Activated CD4-positive, alpha-beta T cell treated with anti-CD3 and anti-CD28 coated beads, Interleukin-2, amount 10 ng/mL, durations not matched to agents 24 days and 14 days (primary cell): ENCODE measurements at regions of chr3 and their contacts with region 1.

Region 1: GRCh38 chr3:32502118-32502945 is at the start of gene CMTM6:
- DNase-seq: peak; percentile 92
- H3K4me3 Mint-ChIP-seq: peak within 1 kb of the TSS; percentile 90
- H3K27ac Mint-ChIP-seq: peak within 1 kb of the TSS; percentile 86
- H3K4me1 Mint-ChIP-seq: peaks cover 28% of the 10 kb centered on the region
- H3K27me3 Mint-ChIP-seq: peaks cover 2% of the 10 kb centered on the region
- total RNA-seq, gene CMTM6: 79.3 and 79.6 TPM in 2 replicates

Region 2: GRCh38 chr3:32684800-32685542 is 182.6 kb after region 1 on chr3 and contains the start of gene CNOT10:
- intact Hi-C with region 1: loop called (anchors 1 kb)
- DNase-seq: peak; percentile 99
- H3K4me3 Mint-ChIP-seq: peak within 1 kb of the TSS; percentile 95
- H3K27ac Mint-ChIP-seq: peak within 1 kb of the TSS; percentile 96
- H3K4me1 Mint-ChIP-seq: peaks cover 27% of the 10 kb centered on the region
- H3K27me3 Mint-ChIP-seq: no peaks in the 10 kb centered on the region
- total RNA-seq, gene CNOT10: 61.0 and 74.4 TPM in 2 replicates

Region 3: DNA sequence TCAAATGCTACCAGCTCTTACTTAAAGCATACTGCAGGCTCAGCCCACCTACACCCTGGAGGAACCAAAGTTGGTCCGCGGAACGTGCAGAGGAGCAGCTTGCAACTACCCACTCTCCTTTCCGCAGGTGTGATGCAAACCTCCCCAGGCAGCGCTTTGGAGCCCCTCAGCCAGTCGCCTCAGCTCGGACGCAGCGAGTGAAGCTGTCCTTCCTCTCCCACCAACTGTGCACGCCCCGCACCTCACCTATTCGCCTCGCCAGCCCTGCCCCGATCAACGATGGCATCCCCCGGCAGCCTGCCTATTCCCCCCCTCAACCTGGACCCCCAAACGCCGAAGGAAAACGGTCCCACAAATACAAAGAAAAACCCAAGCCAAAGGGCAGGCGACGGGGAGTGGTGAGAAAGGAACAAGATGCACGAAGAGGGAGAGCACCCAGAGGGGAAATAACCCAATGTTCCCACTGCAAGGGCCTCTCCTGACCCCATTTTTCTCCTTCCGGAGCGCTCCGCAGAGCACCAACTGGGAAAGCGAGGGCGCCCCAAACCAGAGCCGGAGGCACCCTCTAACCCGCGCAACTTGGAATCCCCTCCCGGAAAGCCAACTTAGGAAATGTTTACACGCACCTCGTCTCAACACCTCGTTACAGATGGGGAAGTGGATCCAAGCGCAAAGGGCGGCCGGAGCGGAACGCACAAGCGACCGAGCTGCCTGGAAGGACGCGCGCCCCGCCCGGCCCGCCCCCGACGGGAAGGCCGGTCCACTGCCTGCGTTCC is 593.9 kb after region 1 on chr3:
- intact Hi-C with region 1: loop called (anchors 5 kb)
- DNase-seq: peak; percentile 86
- H3K4me3 Mint-ChIP-seq: peak overlapping the region; percentile 99
- H3K27ac Mint-ChIP-seq: peak overlapping the region; percentile 90
- H3K4me1 Mint-ChIP-seq: peaks cover 38% of the 10 kb centered on the region
- H3K27me3 Mint-ChIP-seq: peaks cover 2% of the 10 kb centered on the region